Activated CD8-positive, alpha-beta T cell treated with anti-CD3 and anti-CD28 coated beads for 36 hours (primary cell): ENCODE measurements at regions of chr2 and their contacts with region 1.

Region 1: DNA sequence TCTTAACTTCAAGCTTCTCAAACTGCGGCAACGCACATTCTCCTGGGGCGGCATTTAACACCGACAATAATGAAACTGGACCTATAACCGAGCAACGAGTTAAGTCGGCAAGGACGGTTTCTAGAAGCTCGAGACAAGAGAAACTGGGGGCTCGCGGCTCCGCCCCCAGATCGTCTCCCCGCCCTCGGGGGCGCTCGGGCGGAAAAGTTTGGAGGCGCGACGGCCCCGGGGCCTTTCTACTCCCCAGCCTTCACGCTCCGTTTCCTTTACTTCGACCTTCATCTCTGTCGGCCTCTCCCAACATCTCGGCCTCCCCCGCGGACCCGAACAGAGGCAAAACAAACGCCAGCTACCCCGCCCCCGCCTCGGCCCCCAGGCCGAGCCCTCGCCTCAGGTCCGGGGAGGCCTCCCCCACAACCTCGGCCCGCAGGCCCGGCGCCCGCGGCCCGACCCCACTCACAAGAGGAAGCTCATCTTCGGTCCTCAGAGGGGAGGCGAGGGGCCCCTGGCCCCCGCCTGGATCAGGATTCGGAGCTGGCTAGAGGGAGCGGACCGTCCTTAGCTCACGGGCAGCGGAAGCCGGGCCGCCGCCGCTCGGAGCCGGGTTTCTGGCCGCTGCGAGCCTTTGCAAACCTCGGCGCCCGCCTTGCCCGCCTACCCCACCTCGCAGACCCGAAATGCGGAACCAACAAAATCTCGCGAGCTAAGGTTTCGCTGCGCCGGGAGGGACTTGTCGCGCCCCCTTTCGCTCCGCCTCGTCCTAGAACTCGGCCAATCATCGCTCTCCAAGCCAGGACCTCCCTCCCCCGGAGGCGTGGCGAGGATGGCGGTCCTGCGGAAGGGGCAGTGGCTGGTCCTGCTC is at the start of gene MOB1A:
- DNase-seq: peak; percentile 99
- ATAC-seq: peak; percentile 94
- H3K4me3 Mint-ChIP-seq: peak within 1 kb of the TSS; percentile 90
- H3K27ac Mint-ChIP-seq: peak within 1 kb of the TSS; percentile 94
- H3K4me1 Mint-ChIP-seq: peaks cover 41% of the 10 kb centered on the region
- H3K27me3 Mint-ChIP-seq: no peaks in the 10 kb centered on the region
- CTCF ChIP-seq: no peak
- total RNA-seq, gene MOB1A: 150 to 156 TPM

Region 2: GRCh38 chr2:74025971-74026612 is 152.3 kb before region 1 on chr2:
- CTCF ChIA-PET with region 1: no interaction called
- POLR2A ChIA-PET with region 1: no interaction called
- intact Hi-C with region 1: no loop called
- DNase-seq: peak; percentile 49
- ATAC-seq: peak; percentile 66
- H3K4me3 Mint-ChIP-seq: no peak overlapping the region
- H3K27ac Mint-ChIP-seq: peak overlapping the region; percentile 87
- H3K4me1 Mint-ChIP-seq: peaks cover 72% of the 10 kb centered on the region
- H3K27me3 Mint-ChIP-seq: no peaks in the 10 kb centered on the region
- CTCF ChIP-seq: no peak

Region 3: DNA sequence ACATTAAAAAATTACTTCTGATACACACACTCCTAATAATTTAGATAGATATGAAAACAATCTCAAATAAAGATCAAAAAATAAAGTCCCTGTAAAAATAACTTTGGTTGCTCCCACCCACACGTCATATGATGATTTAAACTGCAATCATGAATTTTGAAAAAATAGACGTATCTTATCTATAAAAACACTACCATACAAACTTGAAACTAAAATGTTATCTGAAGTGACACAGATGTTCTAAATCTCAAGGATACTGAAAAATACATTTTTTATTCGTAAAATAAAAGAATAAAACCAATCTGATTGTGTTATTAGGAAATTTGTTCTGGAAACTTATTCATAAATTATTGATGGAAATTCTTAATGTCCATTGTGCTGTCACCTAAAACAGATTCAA is 22.6 kb before region 1 on chr2:
- CTCF ChIA-PET with region 1: interaction called, 24 read pairs
- POLR2A ChIA-PET with region 1: interaction called, 51 read pairs
- intact Hi-C with region 1: no loop called
- DNase-seq: no peak
- ATAC-seq: no peak
- H3K4me3 Mint-ChIP-seq: no peak overlapping the region
- H3K27ac Mint-ChIP-seq: peak overlapping the region; percentile 42
- H3K4me1 Mint-ChIP-seq: no peaks in the 10 kb centered on the region
- H3K27me3 Mint-ChIP-seq: no peaks in the 10 kb centered on the region
- CTCF ChIP-seq: no peak

Region 4: DNA sequence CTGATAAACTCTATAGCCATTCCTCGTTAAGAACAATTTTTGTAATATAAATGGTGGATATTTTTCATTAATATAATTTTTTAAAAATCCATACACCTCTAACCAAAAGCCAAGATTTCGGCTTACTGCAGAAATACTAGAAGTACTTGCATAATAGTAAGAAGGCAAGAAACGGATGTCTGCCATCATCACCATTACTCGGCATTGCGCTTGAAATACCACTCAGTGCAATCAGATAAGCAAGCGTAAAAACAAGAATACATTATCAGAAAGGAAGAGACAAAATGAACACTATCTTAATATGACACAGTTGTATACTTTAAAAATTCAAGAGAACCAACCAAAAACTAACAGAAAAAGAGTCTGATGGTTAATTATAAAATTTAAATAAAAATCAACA is 15.5 kb before region 1 on chr2:
- CTCF ChIA-PET with region 1: interaction called, 31 read pairs
- POLR2A ChIA-PET with region 1: interaction called, 53 read pairs
- intact Hi-C with region 1: no loop called
- DNase-seq: no peak
- ATAC-seq: no peak
- H3K4me3 Mint-ChIP-seq: no peak overlapping the region
- H3K27ac Mint-ChIP-seq: no peak overlapping the region
- H3K4me1 Mint-ChIP-seq: peaks cover 6% of the 10 kb centered on the region
- H3K27me3 Mint-ChIP-seq: no peaks in the 10 kb centered on the region
- CTCF ChIP-seq: no peak

Region 5: DNA sequence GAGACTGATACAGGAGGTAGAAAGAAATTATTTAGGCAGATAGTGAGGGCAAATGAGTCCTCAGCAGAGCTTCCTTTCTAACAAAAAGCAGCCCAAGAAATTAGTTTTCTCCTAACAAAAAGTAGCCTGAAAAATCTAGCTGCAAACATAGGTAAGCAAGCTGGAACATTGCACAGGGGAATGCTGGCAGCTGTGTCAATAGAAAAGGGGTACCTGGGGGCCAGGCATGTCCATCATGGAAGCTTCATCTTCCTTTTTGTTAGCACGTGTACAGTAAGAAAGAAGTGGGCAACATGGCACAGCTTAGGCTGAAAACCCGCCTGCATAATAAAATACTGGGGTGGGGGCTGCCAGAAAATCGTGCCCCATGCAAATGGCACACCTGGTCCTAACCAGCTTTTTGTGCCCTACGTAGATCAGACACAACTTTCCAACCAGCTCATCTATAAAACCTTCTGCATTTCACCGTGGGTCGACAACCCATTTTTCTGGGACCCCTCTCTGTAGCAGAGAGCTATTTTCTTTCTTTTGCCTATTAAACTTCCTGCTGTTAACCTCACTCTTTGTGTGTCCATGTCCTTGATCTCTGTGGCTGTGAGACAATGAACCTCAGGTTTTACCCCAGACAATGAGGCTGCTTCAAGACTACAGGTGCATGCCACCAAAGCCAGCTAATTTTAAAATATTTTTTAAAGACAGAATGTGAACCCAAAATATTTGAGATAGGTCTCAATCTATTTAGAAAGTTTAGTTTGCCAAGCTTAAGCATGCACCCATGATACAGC is 13.4 kb after region 1 on chr2:
- CTCF ChIA-PET with region 1: interaction called, 67 read pairs
- POLR2A ChIA-PET with region 1: interaction called, 160 read pairs
- intact Hi-C with region 1: no loop called
- DNase-seq: no peak
- ATAC-seq: no peak
- H3K4me3 Mint-ChIP-seq: no peak overlapping the region
- H3K27ac Mint-ChIP-seq: no peak overlapping the region
- H3K4me1 Mint-ChIP-seq: no peaks in the 10 kb centered on the region
- H3K27me3 Mint-ChIP-seq: peaks cover 6% of the 10 kb centered on the region
- CTCF ChIP-seq: no peak

Region 6: DNA sequence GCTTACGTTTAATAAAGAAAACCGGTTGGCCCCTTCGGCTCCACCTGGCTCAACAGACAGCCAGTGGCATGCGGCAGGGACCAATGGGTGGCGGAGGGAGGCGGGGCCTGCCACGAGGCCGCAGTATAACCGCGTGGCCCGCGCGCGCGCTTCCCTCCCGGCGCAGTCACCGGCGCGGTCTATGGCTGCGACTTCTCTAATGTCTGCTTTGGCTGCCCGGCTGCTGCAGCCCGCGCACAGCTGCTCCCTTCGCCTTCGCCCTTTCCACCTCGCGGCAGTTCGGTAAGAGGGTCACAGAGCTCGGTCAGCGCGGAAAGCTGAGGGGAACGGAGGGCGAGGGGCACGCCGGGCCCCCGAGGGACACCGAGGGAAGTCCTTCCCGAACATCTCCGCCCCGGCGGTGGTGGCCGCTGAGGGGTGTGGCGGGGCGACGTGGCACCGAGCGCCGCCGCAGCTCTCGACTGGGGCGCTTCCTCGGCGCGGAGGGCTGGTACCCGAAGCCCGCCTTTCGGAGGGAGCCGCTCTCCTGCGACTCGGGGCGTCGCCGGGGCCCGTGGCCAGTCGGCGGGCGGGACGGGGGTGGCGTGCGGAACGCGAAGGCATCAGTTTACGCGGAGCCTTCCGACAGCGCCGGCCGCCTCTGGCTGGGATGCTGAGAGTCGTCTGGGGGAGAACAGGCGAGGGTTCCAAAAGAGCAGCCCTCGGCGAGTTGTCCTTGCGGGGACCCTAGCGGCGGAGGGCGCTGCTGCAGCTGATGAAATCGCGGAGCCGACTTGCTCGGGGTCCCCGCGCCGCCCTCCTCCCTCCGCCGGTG is 20.2 kb after region 1 on chr2 and contains the start of gene MTHFD2:
- CTCF ChIA-PET with region 1: interaction called, 67 read pairs
- POLR2A ChIA-PET with region 1: interaction called, 160 read pairs
- intact Hi-C with region 1: no loop called
- DNase-seq: peak; percentile 97
- ATAC-seq: peak; percentile 90
- H3K4me3 Mint-ChIP-seq: peak within 1 kb of the TSS; percentile 87
- H3K27ac Mint-ChIP-seq: peak within 1 kb of the TSS; percentile 98
- H3K4me1 Mint-ChIP-seq: peaks cover 36% of the 10 kb centered on the region
- H3K27me3 Mint-ChIP-seq: peaks cover 2% of the 10 kb centered on the region
- CTCF ChIP-seq: peak; percentile 82
- total RNA-seq, gene MTHFD2: 348 to 361 TPM

Region 7: GRCh38 chr2:74206180-74206688 is 27.8 kb after region 1 on chr2:
- CTCF ChIA-PET with region 1: interaction called, 67 read pairs
- POLR2A ChIA-PET with region 1: interaction called, 160 read pairs
- intact Hi-C with region 1: no loop called
- DNase-seq: peak; percentile 80
- ATAC-seq: peak; percentile 91
- H3K4me3 Mint-ChIP-seq: peak overlapping the region; percentile 67
- H3K27ac Mint-ChIP-seq: peak overlapping the region; percentile 97
- H3K4me1 Mint-ChIP-seq: peaks cover 59% of the 10 kb centered on the region
- H3K27me3 Mint-ChIP-seq: no peaks in the 10 kb centered on the region
- CTCF ChIP-seq: no peak